Activated naive CD4-positive, alpha-beta T cell treated with anti-CD3 and anti-CD28 coated beads for 36 hours (primary cell): ENCODE measurements at regions of chr1 and their contacts with region 1.

Region 1: DNA sequence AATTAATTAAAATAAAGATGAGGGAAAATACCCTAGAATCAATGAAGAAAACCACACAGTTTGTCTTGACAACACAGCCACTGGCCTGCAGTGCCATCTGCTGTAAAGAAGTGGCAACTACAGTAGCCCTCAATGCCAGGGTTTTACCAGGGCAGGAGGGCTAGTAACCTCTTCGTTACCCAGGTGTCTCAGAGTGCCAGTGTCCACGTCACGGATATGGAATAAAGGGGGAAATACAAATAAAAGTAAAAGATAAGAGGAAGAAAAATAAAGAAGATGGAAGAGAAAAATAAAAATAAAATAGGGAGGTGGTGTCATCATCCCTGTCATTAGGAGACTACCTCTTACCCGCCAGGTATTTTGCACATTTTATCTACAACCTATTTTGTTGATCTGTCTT is 14.2 kb upstream of the SLC44A3 start:
- DNase-seq: peak; percentile 66
- H3K4me3 Mint-ChIP-seq: no peak overlapping the region
- H3K27ac Mint-ChIP-seq: no peak overlapping the region
- H3K4me1 Mint-ChIP-seq: peaks cover 13% of the 10 kb centered on the region
- H3K27me3 Mint-ChIP-seq: peaks cover 4% of the 10 kb centered on the region

Region 2: DNA sequence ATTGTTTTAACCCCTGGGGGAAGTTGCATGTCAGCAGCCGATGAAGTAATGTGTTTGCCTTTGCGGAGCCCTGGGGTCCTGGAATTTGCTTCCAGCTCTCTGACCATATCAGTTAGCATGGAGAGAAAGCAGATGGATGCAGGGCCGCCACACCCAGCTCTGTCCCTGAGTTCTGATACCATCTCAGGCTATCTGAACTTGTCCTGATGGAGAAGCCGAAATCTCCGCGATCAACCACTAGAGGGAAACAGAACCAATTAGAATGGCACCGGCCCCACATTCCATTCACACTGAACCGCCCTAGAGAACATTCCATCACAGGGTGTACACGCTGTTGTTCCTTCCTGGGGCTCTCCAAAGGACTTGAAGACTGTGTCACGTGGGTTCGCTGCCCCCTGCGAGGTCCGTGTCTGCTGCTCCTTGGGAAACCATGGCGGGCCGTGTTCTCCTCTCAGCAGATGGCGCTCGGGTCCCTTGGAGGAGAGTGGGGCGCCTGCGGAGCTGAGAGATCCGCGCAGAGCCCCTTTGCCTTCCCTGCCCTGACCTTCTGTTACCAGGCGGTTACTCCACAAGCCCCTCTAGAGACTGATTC is 760.4 kb before region 1 on chr1:
- CTCF ChIA-PET with region 1: interaction called, 6 read pairs
- intact Hi-C with region 1: loop called (anchors 1 kb)
- DNase-seq: peak; percentile 65
- H3K4me3 Mint-ChIP-seq: peak overlapping the region; percentile 37
- H3K27ac Mint-ChIP-seq: no peak overlapping the region
- H3K4me1 Mint-ChIP-seq: no peaks in the 10 kb centered on the region
- H3K27me3 Mint-ChIP-seq: peaks cover 14% of the 10 kb centered on the region

Region 3: GRCh38 chr1:94237291-94238226 is 568.4 kb before region 1 on chr1 and contains the start of gene ARHGAP29:
- CTCF ChIA-PET with region 1: no interaction called
- intact Hi-C with region 1: loop called (anchors 10 kb)
- DNase-seq: peak; percentile 67
- H3K4me3 Mint-ChIP-seq: peak within 1 kb of the TSS; percentile 68
- H3K27ac Mint-ChIP-seq: no peak within 1 kb of the TSS
- H3K4me1 Mint-ChIP-seq: peaks cover 7% of the 10 kb centered on the region
- H3K27me3 Mint-ChIP-seq: peaks cover 64% of the 10 kb centered on the region
- total RNA-seq, gene ARHGAP29: 0.37 to 0.48 TPM

Region 4: GRCh38 chr1:94475232-94475631 is 330.7 kb before region 1 on chr1:
- CTCF ChIA-PET with region 1: interaction called, 56 read pairs
- intact Hi-C with region 1: no loop called
- DNase-seq: no peak
- H3K4me3 Mint-ChIP-seq: no peak overlapping the region
- H3K27ac Mint-ChIP-seq: no peak overlapping the region
- H3K4me1 Mint-ChIP-seq: no peaks in the 10 kb centered on the region
- H3K27me3 Mint-ChIP-seq: no peaks in the 10 kb centered on the region

Region 5: DNA sequence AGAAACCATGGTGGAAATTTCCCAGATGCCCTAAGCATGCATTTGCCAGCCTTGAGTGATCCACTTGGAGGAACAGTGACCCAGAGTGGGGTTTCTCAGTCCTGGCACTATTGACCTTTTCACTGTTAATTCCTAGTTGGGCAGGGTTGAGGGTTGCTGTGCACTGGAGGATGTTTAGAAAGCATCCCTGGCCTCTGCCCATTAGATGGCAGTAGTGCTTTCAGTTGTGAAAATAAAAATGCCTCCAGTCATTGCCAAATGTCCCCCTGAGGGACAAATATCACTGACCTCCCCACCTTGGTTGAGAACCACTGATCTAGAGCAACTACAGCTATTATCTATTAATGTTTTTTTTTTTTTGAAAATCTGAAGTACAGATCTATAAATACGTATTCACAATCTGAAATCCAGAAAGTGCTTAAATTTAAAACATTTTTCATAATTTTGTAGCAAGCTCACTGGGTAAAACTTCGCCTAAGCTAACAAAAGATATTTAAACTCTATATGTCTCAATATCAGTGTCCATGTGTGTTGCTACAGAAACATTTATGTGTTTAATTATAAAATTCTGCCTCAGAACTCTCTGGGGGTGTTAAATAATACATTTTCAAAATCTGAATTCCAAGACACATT is 291.7 kb before region 1 on chr1:
- CTCF ChIA-PET with region 1: interaction called, 11 read pairs
- intact Hi-C with region 1: loop called (anchors 2 kb)
- DNase-seq: peak; percentile 6
- H3K4me3 Mint-ChIP-seq: no peak overlapping the region
- H3K27ac Mint-ChIP-seq: no peak overlapping the region
- H3K4me1 Mint-ChIP-seq: no peaks in the 10 kb centered on the region
- H3K27me3 Mint-ChIP-seq: no peaks in the 10 kb centered on the region

Region 6: DNA sequence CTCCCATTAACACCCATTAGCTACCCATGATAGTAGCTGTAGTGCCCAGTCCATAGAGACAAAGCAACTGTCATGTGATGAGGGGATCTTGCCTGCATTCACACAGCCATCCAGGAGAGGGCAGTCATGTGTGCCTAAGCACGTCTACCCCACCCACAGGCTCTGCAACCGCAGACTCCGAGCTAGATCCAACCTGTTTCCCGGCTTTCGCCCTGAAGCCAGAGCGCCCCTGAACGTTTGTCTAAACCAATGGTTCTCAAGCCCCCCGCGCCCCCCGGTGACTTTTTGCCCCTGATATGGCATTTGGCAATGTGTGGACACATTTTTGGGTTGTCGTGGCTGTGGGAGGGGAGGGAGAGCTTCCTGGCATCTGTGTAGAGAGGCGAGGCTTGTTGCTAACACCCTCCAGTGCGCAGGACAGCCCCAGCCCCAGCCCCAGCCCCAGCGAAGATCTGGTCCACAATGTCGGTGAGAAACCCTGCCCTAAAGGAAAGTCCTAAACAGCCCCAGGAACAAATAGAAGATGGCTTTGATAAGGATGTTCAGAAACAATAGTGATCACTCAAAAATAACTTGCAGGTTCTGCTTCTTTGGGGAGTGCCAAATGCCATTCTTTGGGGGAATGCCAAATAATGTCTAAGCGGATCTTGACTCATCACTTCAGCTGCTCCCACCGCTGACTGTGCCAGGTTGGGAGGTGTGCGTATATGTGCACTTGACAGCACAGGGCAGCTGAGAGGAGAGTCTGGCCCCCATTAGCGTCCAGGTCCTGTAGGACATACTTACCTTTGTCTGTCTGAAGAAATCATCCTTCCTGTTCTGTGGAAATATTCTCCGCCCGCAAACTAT is 48.8 kb after region 1 on chr1:
- CTCF ChIA-PET with region 1: interaction called, 10 read pairs
- intact Hi-C with region 1: no loop called
- DNase-seq: peak; percentile 91
- H3K4me3 Mint-ChIP-seq: no peak overlapping the region
- H3K27ac Mint-ChIP-seq: no peak overlapping the region
- H3K4me1 Mint-ChIP-seq: no peaks in the 10 kb centered on the region
- H3K27me3 Mint-ChIP-seq: peaks cover 3% of the 10 kb centered on the region

Region 7: DNA sequence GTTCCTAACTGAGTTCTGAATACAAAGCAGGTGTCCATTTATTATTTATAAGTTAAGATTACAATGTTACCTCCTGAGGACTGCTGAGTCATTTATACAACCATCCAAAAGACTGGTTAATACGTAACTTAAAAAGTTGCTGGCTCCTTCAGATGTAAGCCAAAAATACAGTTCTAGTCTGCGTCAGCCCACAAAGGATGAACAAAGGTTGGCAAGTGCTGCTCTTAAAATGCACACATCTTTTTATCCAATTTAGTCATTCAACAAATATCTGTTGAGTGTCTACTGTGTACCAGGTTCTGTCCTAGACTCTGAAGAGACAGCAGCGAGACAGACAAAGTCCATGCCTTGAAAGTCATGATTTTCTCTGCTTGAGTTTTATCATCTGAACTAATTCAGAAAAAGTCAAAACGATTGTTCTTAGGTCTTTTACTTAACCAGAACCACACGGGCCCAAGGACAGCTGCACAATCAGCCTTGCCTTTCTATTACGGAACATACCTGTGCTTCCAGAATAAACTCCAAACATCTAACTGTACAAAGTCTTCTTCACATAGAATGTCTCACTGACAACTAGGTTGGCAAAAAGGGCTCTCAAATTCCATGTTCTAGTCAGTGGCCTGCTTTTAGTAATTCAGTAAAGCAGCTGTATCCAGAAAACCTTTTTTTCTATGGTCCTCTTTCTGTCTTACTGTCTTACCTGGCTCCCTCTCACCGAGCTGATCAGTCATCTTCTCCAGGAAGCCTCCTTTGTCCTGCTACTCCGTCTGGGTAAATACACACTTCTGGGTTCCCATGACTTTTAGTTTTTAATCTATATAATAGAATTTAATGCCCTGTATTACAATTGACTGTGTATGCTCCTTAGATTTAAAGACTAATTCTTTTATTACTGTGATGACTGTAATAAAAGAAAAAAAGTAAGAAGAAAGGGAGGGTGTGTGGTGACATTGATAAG is 136.5 kb after region 1 on chr1:
- CTCF ChIA-PET with region 1: no interaction called
- intact Hi-C with region 1: no loop called
- DNase-seq: no peak
- H3K4me3 Mint-ChIP-seq: no peak overlapping the region
- H3K27ac Mint-ChIP-seq: no peak overlapping the region
- H3K4me1 Mint-ChIP-seq: no peaks in the 10 kb centered on the region
- H3K27me3 Mint-ChIP-seq: peaks cover 2% of the 10 kb centered on the region

Region 8: DNA sequence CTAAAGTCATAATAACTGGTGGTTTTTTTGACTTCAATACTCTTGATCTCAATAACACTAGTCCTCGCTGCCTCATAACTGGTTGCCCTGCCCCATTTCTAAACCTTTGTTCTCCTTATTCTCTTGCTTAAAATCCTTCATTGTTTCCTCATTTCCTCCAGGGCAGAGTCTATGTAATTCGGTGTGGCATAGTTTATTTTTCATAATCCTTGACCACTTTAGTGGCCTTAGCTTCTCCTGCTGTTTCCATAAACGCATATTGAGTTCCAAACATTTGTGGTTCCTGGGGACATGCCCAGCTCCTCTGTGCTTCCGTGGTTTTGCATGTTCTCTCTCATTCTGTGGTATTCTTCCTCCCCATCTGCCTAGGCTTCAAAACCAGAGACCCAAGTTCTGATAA is 292.3 kb after region 1 on chr1:
- CTCF ChIA-PET with region 1: no interaction called
- intact Hi-C with region 1: no loop called
- DNase-seq: no peak
- H3K4me3 Mint-ChIP-seq: no peak overlapping the region
- H3K27ac Mint-ChIP-seq: no peak overlapping the region
- H3K4me1 Mint-ChIP-seq: no peaks in the 10 kb centered on the region
- H3K27me3 Mint-ChIP-seq: peaks cover 3% of the 10 kb centered on the region